Colonic mucosa (tissue), 4 donors: ENCODE measurements at regions of chr11 and their contacts with region 1.

Region 1: DNA sequence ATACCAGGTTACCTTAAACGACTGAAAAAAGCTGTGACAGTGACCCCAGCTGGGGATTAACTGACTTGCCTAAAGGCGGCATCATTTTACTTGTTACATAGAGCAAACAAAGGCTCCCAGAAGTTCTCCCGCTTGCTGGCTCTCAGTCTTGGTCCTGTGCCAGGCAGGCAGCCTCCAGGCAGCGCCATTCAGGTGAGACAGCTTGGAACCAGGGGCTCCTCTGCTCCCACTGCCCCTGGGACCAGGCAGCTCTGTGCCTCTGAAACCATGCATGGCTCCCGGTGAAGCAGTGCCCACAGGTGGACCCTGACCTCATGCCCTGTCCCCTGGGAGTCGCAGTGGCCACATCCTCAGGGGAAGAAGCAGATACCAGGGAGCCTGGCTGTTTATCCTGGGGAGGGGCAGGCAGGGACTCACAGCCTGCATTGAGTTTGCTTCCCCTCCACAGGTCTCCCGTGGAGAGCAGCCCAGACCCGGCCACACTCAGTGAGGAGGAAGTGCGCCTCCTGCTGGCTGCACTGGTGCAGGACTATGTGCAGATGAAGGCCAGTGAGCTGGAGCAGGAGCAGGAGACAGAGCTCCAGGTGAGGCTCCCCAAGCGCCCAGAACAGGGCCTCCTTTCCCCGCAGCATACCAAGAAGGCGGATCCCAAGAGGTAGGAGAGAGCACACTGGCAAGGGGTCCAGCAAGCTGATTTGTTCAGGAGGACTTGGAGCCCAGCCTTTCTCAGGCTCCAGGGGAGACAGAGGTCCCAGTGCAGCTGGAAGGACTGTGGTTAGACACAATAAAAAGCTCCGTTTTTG is 15.6 kb upstream of the CYP2R1 start:
- DNase-seq: peak; percentile 89
- H3K4me3 ChIP-seq: no peak overlapping the region
- H3K27ac ChIP-seq: no peak overlapping the region
- H3K4me1 ChIP-seq: peaks cover 6% of the 10 kb centered on the region
- H3K27me3 ChIP-seq: no peaks in the 10 kb centered on the region
- CTCF ChIP-seq: peak; percentile 85

Region 2: GRCh38 chr11:14537134-14537599 is 370.4 kb before region 1 on chr11:
- intact Hi-C with region 1: loop called (anchors 5 kb)
- DNase-seq: peak; percentile 53
- H3K4me3 ChIP-seq: no peak overlapping the region
- H3K27ac ChIP-seq: no peak overlapping the region
- H3K4me1 ChIP-seq: peaks cover under 1% of the 10 kb centered on the region
- H3K27me3 ChIP-seq: no peaks in the 10 kb centered on the region
- CTCF ChIP-seq: peak; percentile 83

Region 3: GRCh38 chr11:14789879-14790484 is 117.6 kb before region 1 on chr11:
- intact Hi-C with region 1: loop called (anchors 2 kb)
- DNase-seq: no peak
- H3K4me3 ChIP-seq: no peak overlapping the region
- H3K27ac ChIP-seq: no peak overlapping the region
- H3K4me1 ChIP-seq: no peaks in the 10 kb centered on the region
- H3K27me3 ChIP-seq: no peaks in the 10 kb centered on the region
- CTCF ChIP-seq: peak; percentile 48

Region 4: DNA sequence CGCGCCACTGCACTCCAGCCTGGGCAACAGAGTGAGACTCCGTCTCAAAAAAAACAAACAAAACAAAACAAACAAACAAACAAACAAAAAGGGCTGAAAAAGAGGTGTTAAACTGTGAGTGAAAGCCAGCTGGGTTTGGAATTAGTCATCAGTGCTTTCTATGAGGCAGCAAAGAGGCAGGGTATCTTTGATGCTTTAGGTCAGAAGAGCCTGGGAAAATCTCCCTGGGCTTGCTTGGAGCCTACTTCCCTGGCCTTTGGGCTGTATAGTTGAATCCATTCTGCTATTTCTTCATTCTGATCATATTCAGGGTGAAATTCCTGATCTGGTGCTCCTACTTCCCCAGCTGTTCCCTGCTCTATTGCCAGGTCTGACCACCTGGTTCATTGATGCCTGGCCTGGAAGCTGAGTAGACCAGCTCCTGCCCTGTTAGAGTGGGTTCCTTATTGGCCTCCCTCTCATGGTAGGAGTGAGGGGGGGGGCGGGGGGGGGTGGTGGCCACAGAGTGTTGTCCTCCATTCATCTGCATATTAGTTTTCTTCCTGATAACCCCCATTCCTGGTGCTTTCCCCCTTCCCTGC is 272.7 kb after region 1 on chr11:
- intact Hi-C with region 1: no loop called
- DNase-seq: no peak
- H3K4me3 ChIP-seq: no peak overlapping the region
- H3K27ac ChIP-seq: no peak overlapping the region
- H3K4me1 ChIP-seq: no peaks in the 10 kb centered on the region
- H3K27me3 ChIP-seq: no peaks in the 10 kb centered on the region
- CTCF ChIP-seq: no peak

Region 5: GRCh38 chr11:15208378-15209222 is 301.0 kb after region 1 on chr11:
- intact Hi-C with region 1: loop called (anchors 10 kb)
- DNase-seq: peak; percentile 78
- H3K4me3 ChIP-seq: no peak overlapping the region
- H3K27ac ChIP-seq: no peak overlapping the region
- H3K4me1 ChIP-seq: no peaks in the 10 kb centered on the region
- H3K27me3 ChIP-seq: no peaks in the 10 kb centered on the region
- CTCF ChIP-seq: peak; percentile 90